ENCODE measurements at regions of chr17 and their contacts with region 1.

Region 1: DNA sequence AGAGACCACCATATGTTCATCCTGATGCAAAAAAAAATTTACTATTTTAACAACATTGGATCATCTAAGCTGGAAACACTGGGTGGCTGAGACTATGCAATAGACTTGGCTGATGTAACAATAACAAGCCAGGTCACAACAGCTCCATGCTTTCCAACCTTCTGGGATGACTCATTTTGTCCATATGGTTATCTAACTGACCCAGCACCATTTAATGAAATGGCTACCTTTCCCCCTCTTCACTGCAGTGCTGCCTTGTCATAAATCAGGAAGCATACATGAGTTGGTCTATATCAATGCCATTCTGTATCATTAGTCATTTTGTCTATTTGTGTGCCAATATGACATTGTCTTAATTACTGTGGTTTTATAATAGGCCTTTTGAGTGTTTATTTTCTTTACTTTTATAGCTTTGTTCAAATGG is 217.6 kb upstream of the KCNJ16 start:
- DNase-seq: peak; percentile 97
- ATAC-seq: peak; percentile 98
- H3K4me3 ChIP-seq: no peak overlapping the region
- H3K27ac ChIP-seq: peak overlapping the region; percentile 11
- H3K4me1 ChIP-seq: peaks cover 17% of the 10 kb centered on the region
- H3K27me3 ChIP-seq: no peaks in the 10 kb centered on the region
- CTCF ChIP-seq: no peak

Region 2: GRCh38 chr17:69575346-69575761 is 282.1 kb before region 1 on chr17:
- CTCF ChIA-PET with region 1: no interaction called
- POLR2A ChIA-PET with region 1: no interaction called
- intact Hi-C with region 1: loop called (anchors 1 kb)
- DNase-seq: peak; percentile 97
- ATAC-seq: peak; percentile 87
- H3K4me3 ChIP-seq: no peak overlapping the region; the same call in 1 of the 2 replicates
- H3K27ac ChIP-seq: peak overlapping the region; percentile 58
- H3K4me1 ChIP-seq: peaks cover 25% of the 10 kb centered on the region
- H3K27me3 ChIP-seq: no peaks in the 10 kb centered on the region
- CTCF ChIP-seq: no peak

Region 3: DNA sequence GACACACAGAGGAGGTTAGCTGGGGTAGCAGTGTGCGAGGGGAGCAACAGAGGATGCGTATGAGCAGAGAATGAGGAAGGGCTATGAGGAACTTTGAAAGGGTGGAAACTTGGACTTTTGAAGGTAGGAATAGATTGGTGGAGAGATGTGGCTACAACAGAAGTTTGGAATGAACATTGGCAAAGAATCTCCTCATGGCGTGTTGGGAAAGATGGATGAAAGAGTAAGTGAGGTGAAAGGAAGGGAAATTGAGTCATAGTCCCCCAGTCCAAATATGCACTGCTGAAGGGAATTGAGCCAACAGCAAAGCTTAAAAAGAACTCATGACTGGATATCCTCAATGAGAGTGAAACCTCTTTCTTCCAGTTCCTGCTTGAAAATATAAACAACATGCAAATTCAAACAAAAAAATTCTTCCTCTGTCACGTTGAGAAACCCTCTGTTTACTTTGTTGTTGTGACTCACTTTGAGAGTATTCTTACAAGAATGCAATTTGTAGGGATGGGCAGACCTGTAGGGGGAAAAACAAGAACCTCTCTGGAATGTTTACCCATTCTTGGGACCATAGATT is 95.6 kb before region 1 on chr17:
- CTCF ChIA-PET with region 1: interaction called, 3 read pairs
- POLR2A ChIA-PET with region 1: interaction called, 4 read pairs
- intact Hi-C with region 1: loop called (anchors 1 kb)
- DNase-seq: peak; percentile 98
- ATAC-seq: peak; percentile 93
- H3K4me3 ChIP-seq: no peak overlapping the region; the same call in 1 of the 2 replicates
- H3K27ac ChIP-seq: peak overlapping the region; percentile 84
- H3K4me1 ChIP-seq: peaks cover 50% of the 10 kb centered on the region
- H3K27me3 ChIP-seq: no peaks in the 10 kb centered on the region
- CTCF ChIP-seq: no peak

Region 4: GRCh38 chr17:69812240-69812837 is 45.1 kb before region 1 on chr17:
- CTCF ChIA-PET with region 1: no interaction called
- POLR2A ChIA-PET with region 1: no interaction called
- intact Hi-C with region 1: loop called (anchors 1 kb)
- DNase-seq: peak; percentile 92
- ATAC-seq: peak; percentile 86
- H3K4me3 ChIP-seq: no peak overlapping the region
- H3K27ac ChIP-seq: peak overlapping the region; percentile 45
- H3K4me1 ChIP-seq: peaks cover 36% of the 10 kb centered on the region
- H3K27me3 ChIP-seq: no peaks in the 10 kb centered on the region
- CTCF ChIP-seq: no peak

Region 5: GRCh38 chr17:69913216-69913615 is 55.8 kb after region 1 on chr17:
- CTCF ChIA-PET with region 1: no interaction called
- POLR2A ChIA-PET with region 1: no interaction called
- intact Hi-C with region 1: no loop called
- DNase-seq: no peak
- ATAC-seq: no peak
- H3K4me3 ChIP-seq: no peak overlapping the region
- H3K27ac ChIP-seq: no peak overlapping the region
- H3K4me1 ChIP-seq: no peaks in the 10 kb centered on the region
- H3K27me3 ChIP-seq: no peaks in the 10 kb centered on the region
- CTCF ChIP-seq: no peak

Region 6: DNA sequence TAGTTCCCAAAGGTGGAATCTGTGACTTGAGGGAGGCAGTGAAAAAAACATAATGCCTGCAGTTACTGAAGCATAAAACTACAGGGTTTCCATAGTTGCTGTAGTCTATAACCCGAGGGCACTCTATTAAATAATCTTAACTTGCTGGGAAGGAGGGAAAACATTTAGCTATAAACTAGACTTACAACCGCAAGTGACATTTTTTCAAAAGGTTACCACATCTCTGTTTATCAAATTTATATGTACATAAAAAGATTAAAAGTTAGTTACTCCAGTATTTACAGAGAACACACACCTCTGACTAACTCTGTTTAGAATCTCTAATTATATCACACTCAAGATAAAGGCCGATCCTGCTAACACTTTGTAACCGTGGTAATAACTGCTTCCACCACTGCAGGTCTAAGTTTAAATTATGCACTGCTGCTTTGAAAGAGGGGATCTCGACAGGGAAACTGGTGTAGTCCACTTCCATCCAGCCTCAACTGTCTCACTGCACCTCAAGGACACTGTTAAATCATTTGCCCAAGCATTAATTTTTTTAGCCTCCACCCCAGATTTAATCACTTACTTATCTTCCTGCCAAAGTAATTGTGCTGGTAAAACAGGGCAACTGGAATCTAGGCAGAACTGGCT is 232.2 kb after region 1 on chr17:
- CTCF ChIA-PET with region 1: interaction called, 4 read pairs
- POLR2A ChIA-PET with region 1: no interaction called
- intact Hi-C with region 1: loop called (anchors 1 kb)
- DNase-seq: peak; percentile 62
- ATAC-seq: peak; percentile 67
- H3K4me3 ChIP-seq: no peak overlapping the region
- H3K27ac ChIP-seq: no peak overlapping the region
- H3K4me1 ChIP-seq: peaks cover 22% of the 10 kb centered on the region
- H3K27me3 ChIP-seq: no peaks in the 10 kb centered on the region
- CTCF ChIP-seq: no peak

Region 7: DNA sequence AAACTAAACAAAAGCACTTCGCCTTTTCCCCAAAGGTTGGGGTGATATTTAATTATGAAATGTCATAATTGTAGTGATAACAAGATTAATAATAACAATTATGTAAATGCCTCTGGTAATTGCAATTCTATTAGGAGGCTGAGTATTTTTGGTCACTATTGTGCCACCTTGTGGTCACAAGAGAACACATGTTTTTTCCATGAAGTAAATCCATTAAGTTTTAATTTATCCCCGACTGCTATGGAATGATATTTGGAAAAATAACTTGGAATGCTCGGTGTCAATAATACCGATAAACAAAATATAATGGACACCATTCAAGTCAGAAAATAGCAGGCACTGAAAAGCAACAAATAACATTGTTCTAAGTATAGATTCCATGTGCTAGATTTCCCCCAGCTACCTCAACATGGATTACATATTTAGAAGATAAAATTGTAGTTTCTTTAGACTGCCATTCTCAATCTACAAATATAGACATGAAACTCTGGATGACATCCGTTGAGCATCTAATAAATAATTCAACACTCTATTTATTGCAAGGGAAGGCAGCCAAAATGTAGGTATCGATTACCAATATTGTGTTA is 286.9 kb after region 1 on chr17:
- CTCF ChIA-PET with region 1: no interaction called
- POLR2A ChIA-PET with region 1: no interaction called
- intact Hi-C with region 1: loop called (anchors 2 kb)
- DNase-seq: peak; percentile 56
- ATAC-seq: no peak; the same call in 1 of the 2 replicates
- H3K4me3 ChIP-seq: no peak overlapping the region
- H3K27ac ChIP-seq: no peak overlapping the region
- H3K4me1 ChIP-seq: peaks cover 7% of the 10 kb centered on the region
- H3K27me3 ChIP-seq: no peaks in the 10 kb centered on the region
- CTCF ChIP-seq: peak; percentile 91

Region 8: GRCh38 chr17:70405492-70406220 is 548.2 kb after region 1 on chr17:
- CTCF ChIA-PET with region 1: no interaction called
- POLR2A ChIA-PET with region 1: no interaction called
- intact Hi-C with region 1: loop called (anchors 1 kb)
- DNase-seq: peak; percentile 99
- ATAC-seq: peak; percentile 95
- H3K4me3 ChIP-seq: peak overlapping the region; percentile 33; the same call in 1 of the 2 replicates
- H3K27ac ChIP-seq: peak overlapping the region; percentile 72
- H3K4me1 ChIP-seq: peaks cover 24% of the 10 kb centered on the region
- H3K27me3 ChIP-seq: no peaks in the 10 kb centered on the region
- CTCF ChIP-seq: no peak